Activated CD4-positive, alpha-beta T cell treated with anti-CD3 and anti-CD28 coated beads, Interleukin-2, amount 10 ng/mL, durations not matched to agents 7 days and 5 days (primary cell): ENCODE measurements at regions of chr14 and their contacts with region 1.

Region 1: GRCh38 chr14:101809671-101810514 is 48.4 kb downstream of the PPP2R5C start:
- DNase-seq: peak; percentile 93
- H3K4me3 Mint-ChIP-seq: peak overlapping the region; percentile 93
- H3K27ac Mint-ChIP-seq: peak overlapping the region; percentile 99
- H3K4me1 Mint-ChIP-seq: peaks cover 51% of the 10 kb centered on the region
- H3K27me3 Mint-ChIP-seq: no peaks in the 10 kb centered on the region

Region 2: DNA sequence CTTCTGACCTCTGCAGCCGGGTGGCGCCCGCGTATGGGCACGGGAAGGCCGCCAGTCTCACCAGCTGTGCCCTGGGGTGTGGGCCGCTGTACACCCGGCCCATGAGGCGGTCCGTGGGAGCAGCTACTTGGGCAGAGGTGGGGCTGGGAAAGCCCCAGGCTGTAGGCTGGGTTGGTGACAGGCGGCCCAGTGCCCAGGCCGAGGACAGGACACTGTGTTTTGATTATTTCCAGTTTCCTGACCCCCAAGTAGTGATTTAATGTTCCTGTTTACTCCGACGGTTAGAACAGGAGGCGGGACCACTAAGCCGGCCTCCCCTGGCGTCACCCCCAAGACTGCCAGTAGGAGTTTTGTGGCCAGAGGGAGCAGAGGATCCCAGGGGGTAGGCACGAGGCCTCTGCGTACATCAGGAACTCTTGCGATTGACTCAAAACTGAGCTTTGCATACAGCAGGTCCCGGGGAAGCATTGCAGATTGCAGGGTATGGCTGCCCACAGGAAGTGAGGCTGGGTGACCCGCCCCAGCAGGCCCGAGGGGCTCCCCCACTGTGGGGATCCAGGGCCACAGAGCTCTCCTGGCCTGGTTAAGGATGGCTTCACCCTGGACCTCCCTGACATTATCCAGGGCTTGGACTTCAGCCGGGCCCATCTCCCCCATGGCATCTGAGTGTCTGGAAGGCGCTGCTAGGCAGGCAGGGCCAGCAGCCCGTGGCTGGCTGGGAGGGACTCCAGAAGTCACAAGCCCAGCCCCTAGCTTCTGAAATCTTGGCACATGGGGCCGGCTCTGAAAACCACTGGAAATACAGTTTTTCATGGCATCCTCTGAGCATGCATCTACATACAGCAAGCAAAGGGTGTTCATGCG is 291.1 kb before region 1 on chr14:
- CTCF ChIA-PET with region 1: no interaction called
- POLR2A ChIA-PET with region 1: no interaction called
- DNase-seq: no peak
- H3K4me3 Mint-ChIP-seq: no peak overlapping the region
- H3K27ac Mint-ChIP-seq: no peak overlapping the region
- H3K4me1 Mint-ChIP-seq: no peaks in the 10 kb centered on the region
- H3K27me3 Mint-ChIP-seq: no peaks in the 10 kb centered on the region

Region 3: DNA sequence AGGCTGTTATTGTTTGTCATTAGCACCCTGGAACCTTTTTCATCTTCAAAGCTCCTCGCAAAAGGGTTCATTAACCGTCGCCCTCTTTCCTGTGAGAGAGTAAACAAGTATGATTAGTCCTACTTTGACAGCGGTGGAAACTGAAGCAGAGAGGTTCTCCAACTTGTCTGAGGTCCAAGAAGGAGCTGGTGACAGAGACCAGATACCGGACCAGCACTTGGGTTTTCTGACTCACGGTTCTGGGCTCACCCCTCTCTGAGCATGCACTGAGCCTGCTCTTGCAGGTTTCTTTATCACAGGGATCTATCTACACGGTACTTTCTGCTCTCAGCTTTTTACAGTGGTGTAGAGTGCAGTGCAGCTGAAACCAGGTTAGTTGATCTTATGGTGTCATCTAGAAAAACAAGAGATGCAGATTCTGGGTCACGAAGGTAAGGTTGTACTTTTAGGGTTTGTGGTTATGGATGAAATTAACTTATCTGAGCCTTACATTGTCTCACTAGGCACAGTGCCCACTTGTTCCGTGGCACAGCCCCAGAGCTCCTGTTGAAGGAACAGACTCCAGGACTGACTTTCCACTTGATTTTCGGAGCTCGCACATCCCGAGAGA is 13.7 kb after region 1 on chr14:
- CTCF ChIA-PET with region 1: interaction called, 13 read pairs
- POLR2A ChIA-PET with region 1: interaction called, 43 read pairs
- DNase-seq: peak; percentile 78
- H3K4me3 Mint-ChIP-seq: peak overlapping the region; percentile 77
- H3K27ac Mint-ChIP-seq: peak overlapping the region; percentile 97
- H3K4me1 Mint-ChIP-seq: peaks cover 76% of the 10 kb centered on the region
- H3K27me3 Mint-ChIP-seq: no peaks in the 10 kb centered on the region